AG04449 (cell line): ENCODE measurements at regions of chr5 and their contacts with region 1.

Region 1: DNA sequence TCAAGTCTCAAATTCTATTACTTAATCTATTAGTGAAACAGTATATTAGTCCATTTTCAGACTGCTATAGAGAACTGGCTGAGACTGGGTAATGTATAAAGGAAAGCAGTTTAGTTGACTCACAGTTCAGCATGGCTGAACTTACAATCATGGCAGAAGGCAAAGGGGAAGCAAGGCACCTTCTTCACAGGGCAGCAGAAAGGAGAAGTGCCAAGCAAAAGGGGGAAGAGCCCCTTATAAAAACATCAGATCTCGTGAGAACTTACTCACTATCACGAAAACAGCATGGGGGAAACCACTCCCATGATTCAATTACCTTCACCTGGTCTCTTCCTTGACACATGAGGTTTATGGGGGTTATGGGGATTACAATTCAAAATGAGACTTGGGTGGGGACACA is 67.9 kb upstream of the CHSY3 start:
- DNase-seq: no peak
- H3K4me3 ChIP-seq: no peak overlapping the region
- CTCF ChIP-seq: no peak

Region 2: GRCh38 chr5:129341306-129341705 is 495.0 kb before region 1 on chr5:
- CTCF ChIA-PET with region 1: no interaction called
- POLR2A ChIA-PET with region 1: no interaction called
- DNase-seq: no peak
- H3K4me3 ChIP-seq: no peak overlapping the region
- CTCF ChIP-seq: no peak

Region 3: GRCh38 chr5:129852747-129853352 is 16.5 kb after region 1 on chr5:
- CTCF ChIA-PET with region 1: interaction called, 10 read pairs
- POLR2A ChIA-PET with region 1: no interaction called
- DNase-seq: peak; percentile 4
- H3K4me3 ChIP-seq: no peak overlapping the region
- CTCF ChIP-seq: peak; percentile 94

Region 4: GRCh38 chr5:129996896-129997295 is 160.6 kb after region 1 on chr5:
- CTCF ChIA-PET with region 1: no interaction called
- POLR2A ChIA-PET with region 1: no interaction called
- DNase-seq: peak; percentile 51
- H3K4me3 ChIP-seq: no peak overlapping the region
- CTCF ChIP-seq: no peak